A549 (cell line): ENCODE measurements at regions of chr11 and their contacts with region 1.

Region 1: GRCh38 chr11:33039274-33040032 is at the start of gene TCP11L1:
- DNase-seq: peak; percentile 70 to 96
- ATAC-seq: peak; percentile 88 to 89
- H3K4me3 ChIP-seq: peak within 1 kb of the TSS; percentile 69
- H3K27ac ChIP-seq: peak within 1 kb of the TSS; percentile 91 to 96
- H3K4me1 ChIP-seq: peaks cover 42% of the 10 kb centered on the region
- CTCF ChIP-seq: no peak
- EP300 ChIP-seq: no peak
- POLR2A ChIP-seq: peak; percentile 52
- RAD21 ChIP-seq: peak in 1 of 2 experiments; percentile 13; a peak in 2 of 5 replicates
- polyA plus RNA-seq, gene TCP11L1: 42.1 and 43.0 TPM in 2 replicates

Region 2: DNA sequence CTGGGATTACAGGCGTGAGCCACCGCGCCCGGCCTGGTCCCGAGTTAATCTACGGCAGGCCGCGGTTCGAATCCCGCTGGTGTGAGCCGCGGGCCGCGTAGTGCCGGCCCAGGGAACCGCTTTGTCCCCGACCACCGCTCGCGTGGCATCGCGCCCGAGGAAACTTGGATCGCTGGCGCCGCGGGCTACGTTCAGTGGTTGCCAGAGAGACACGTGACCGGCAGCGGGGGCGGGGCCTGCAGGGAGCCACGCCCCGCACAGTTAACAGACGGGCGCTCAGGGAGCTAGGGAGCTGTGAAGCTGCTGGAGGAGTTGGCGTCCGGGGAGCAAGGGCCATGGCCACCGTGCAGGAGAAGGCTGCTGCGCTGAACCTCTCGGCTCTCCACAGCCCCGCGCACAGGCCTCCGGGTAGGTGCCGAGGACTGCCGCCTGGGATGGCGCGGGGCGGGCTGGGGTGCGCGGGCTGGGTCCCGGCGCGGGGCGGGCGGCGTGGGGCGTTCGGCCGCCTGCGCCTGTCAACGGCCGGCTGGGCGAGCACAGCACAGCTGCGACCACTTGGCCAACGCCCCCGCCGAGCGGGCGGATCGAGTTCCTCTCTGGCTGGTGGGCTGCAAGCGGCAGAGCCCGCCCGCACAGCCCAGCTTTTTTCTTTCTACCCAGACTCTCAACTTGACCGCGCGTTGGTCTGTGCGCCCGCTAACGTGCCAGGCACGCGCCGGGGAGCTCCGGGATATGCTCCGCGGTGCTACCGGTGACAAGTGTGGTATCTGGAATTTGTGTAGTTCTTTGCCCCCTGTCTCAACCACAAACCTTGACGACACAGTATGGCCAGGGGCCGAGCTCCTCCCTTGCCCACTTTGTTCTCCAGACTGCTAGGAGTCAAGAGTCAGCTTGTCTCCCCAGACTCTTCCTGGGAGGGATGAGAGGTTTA is 23.6 kb before region 1 on chr11 and contains the start of gene DEPDC7:
- CTCF ChIA-PET with region 1: interaction called, 4 read pairs
- POLR2A ChIA-PET with region 1: interaction called, 32 read pairs
- DNase-seq: peak; percentile 89 to 92
- ATAC-seq: peak; percentile 94 to 95
- H3K4me3 ChIP-seq: peak within 1 kb of the TSS; percentile 82
- H3K27ac ChIP-seq: peak within 1 kb of the TSS; percentile 76 to 90
- H3K4me1 ChIP-seq: peaks cover 38% of the 10 kb centered on the region
- CTCF ChIP-seq: no peak
- EP300 ChIP-seq: no peak
- POLR2A ChIP-seq: peak; percentile 78
- RAD21 ChIP-seq: no peak
- polyA plus RNA-seq, gene DEPDC7: 15.2 and 16.6 TPM in 2 replicates

Region 3: DNA sequence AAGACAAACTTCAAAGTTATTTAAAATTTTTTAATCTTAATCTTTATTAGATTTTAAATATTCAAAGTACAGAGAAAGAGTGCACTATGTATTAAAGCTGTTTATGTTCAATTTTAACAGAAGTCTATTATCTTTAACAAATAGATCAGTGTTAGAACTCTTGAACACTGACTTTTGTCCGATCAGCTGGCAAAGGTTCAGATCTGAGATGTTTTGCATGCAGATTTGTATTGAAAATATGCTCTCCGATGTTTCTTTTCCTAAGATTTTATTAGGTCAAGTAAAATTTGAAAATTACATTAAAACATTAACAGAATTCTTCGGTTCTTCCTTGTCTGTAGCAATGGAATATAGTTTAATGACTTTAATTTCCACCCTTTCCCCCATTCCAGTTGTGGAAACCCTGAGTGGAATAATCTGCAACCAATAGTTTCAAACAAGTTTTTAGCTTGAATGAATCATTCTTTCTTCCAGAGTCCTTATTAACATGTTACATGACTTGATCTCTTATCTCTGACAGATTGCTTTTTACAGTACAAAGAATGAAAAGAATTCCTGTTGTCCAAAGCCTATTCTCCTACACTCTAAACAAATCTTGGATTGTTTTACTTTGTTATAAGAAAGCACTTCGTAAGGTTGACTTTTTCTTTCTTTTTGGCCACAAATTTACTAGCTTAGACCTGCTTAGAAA is 11.5 kb before region 1 on chr11:
- CTCF ChIA-PET with region 1: interaction called, 11 read pairs
- POLR2A ChIA-PET with region 1: interaction called, 4 read pairs
- DNase-seq: no peak
- ATAC-seq: no peak
- H3K4me3 ChIP-seq: no peak overlapping the region
- H3K27ac ChIP-seq: no peak overlapping the region
- H3K4me1 ChIP-seq: peaks cover 8% of the 10 kb centered on the region; the same call in 2 of the 3 replicates
- CTCF ChIP-seq: no peak
- EP300 ChIP-seq: no peak
- POLR2A ChIP-seq: no peak
- RAD21 ChIP-seq: no peak

Region 4: DNA sequence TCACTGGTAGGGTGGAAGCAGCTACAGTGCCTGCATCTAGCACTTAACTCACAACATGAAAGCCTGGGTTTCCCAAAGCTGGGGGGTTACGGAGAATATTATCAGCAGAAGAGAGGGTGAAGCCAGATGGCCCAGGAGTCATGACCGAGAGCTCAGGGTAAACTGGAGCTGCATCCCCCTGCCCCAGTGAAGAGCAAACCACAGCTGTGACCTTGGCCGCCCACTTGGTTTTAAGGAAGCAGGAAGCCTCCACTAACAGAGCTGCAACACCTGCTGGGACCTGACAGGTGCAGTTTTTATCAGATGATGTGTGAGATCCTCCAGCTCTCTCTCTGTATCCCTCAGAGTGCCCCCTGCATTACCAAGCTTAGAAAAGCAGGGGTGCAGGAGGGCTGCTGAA is 20.8 kb after region 1 on chr11:
- CTCF ChIA-PET with region 1: interaction called, 76 read pairs
- POLR2A ChIA-PET with region 1: interaction called, 34 read pairs
- DNase-seq: no peak
- ATAC-seq: peak in 1 of 2 experiments; percentile 19; a peak in 1 of 6 replicates
- H3K4me3 ChIP-seq: no peak overlapping the region
- H3K27ac ChIP-seq: peak overlapping the region; percentile 85 to 88
- H3K4me1 ChIP-seq: peaks cover 96% of the 10 kb centered on the region
- CTCF ChIP-seq: no peak
- EP300 ChIP-seq: no peak
- POLR2A ChIP-seq: no peak
- RAD21 ChIP-seq: no peak

Region 5: GRCh38 chr11:33722579-33723225 is 683.2 kb after region 1 on chr11:
- CTCF ChIA-PET with region 1: no interaction called
- POLR2A ChIA-PET with region 1: no interaction called
- DNase-seq: peak in 1 of 2 experiments; percentile 58
- ATAC-seq: peak; percentile 39 to 47
- H3K4me3 ChIP-seq: no peak overlapping the region
- H3K27ac ChIP-seq: peak overlapping the region; percentile 80 to 90
- H3K4me1 ChIP-seq: peaks cover 62% of the 10 kb centered on the region
- CTCF ChIP-seq: no peak
- EP300 ChIP-seq: no peak
- POLR2A ChIP-seq: no peak
- RAD21 ChIP-seq: no peak